Adrenal gland (tissue), 19 donors: ENCODE measurements at regions of chr22 and their contacts with region 1.

Region 1: DNA sequence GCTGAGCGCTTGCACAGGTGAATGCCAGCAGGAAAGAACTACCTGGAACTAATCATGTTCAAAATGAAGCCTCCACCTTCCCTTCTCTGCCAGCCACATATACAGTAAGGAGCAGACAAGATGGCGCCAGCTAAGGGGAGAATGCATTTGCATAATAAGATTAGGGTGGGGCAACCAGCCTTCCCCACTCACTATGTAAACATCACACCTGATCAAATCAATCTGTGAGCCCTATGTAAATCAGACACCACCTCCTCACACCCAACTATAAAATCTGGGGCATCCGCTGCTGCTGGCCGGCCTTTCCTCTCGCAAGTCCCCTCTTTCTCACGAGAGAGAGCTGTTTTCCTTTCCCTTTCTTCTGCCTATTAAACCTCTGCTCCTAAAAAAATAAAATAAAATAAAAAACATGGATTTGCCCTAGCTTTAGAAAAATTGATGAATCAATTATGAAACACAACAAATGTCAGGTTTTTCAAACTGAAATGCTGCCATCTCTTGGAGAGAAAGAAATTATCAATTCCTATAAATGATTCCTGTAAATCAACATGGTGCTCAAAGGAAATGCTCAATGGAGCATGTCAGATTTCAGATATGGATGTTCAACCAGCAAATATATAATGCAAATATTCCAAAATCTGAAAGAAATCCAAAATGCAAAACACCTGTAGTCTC is 108.9 kb downstream of the SGSM3 start:
- DNase-seq: no peak
- H3K4me3 ChIP-seq: no peak overlapping the region
- H3K27ac ChIP-seq: no peak overlapping the region
- H3K4me1 ChIP-seq: peaks cover 11 to 16% of the 10 kb centered on the region in 2 donors
- H3K27me3 ChIP-seq: no peaks in the 10 kb centered on the region
- CTCF ChIP-seq: peak in 1 of 6 experiments; percentile 19
- POLR2A ChIP-seq: no peak

Region 2: DNA sequence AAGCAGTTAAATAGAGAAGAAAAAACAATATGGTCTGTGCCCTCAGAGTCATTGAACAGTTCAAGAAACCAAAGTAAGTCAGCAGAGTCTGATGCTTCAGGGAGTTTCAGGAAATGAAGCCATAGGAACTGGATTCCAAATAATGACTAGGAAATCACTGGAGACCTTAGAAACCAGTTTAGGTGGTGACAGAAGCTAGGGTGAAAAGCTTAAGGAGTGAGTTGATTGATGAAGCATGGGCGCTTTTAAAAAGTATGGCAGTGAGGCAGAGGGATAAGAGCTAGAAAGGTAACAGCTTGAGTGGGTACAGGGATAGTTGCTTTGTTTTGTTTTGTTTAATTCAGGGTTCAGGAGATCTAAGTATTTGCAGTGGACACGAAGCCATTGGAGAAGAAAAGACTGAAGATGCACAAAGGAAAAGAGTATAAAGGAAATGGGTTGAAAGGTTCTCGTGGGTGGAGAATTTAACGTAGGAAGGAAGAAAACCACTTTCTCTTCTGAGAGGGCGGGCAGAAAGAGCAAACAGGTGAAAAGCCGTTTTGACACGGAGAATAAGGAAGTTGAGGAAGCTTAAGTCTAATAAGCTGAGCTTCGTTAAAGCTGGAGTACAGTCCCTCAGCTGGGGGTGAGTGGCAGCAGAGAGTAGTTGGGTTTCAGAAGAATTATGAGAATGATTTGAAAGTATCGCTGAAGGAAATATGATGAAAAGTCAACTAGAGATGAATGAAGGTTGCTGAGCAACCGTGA is 94.1 kb before region 1 on chr22:
- intact Hi-C with region 1: no loop called
- DNase-seq: no peak
- H3K4me3 ChIP-seq: no peak overlapping the region
- H3K27ac ChIP-seq: no peak overlapping the region
- H3K4me1 ChIP-seq: peaks cover 4 to 21% of the 10 kb centered on the region in 2 donors
- H3K27me3 ChIP-seq: no peaks in the 10 kb centered on the region
- CTCF ChIP-seq: no peak
- POLR2A ChIP-seq: no peak

Region 3: DNA sequence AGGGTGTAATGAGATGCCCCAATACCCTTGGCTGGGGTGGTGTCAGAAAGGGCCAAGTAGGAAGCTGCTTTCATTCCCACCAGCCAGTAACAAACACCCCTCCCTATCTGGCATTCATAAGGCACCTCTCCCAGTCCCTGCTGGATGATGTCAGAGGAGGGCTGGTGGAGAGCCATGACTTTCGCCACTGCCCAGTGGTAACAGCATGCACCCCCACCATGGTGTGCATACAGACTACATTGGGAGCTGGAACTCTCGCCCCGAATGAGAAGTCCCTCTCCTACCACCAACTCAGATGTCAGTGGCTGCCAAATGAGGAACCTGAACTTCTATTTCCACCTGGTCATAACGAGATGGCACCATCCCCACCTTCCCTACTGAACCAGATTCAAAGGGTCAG is 35.5 kb before region 1 on chr22:
- intact Hi-C with region 1: loop called (anchors 5 to 10 kb)
- DNase-seq: peak in 1 of 7 donors; percentile 17
- H3K4me3 ChIP-seq: no peak overlapping the region
- H3K27ac ChIP-seq: no peak overlapping the region
- H3K4me1 ChIP-seq: no peaks in the 10 kb centered on the region
- H3K27me3 ChIP-seq: no peaks in the 10 kb centered on the region
- CTCF ChIP-seq: no peak
- POLR2A ChIP-seq: no peak

Region 4: DNA sequence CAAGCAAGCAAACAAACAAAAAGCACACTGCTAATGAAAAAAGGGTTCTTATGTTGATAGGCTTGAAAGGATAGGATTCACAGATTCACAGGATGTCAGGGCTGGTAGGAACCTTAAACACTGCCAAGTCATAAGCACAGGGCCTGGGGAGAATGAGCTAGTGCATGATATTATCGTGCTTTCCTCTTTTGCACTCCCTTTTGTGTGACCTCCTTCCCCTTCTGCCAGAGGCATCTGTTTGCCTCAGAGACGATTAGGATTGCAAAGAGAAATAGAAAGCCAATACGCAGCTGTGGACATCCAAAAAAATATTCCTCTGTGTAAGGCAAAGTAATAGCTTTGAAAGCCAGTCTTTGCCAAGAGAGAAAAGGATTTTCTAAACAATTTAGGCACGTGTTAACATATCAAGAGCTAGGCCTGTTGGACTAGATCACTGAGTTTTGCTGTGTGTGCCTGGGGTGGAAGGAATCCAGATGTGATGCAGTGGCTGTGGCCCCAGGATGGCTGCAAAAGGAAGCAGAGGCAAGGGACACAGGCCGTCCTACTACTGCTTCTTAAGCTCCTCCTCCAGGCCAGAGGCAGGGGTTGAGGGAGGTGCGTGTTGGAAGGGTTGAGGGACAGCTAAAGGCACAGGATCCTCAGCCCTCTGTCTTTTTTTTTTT is 230.6 kb after region 1 on chr22:
- intact Hi-C with region 1: no loop called
- DNase-seq: peak in 6 of 7 donors; percentile 39 to 70 (median 46)
- H3K4me3 ChIP-seq: no peak overlapping the region
- H3K27ac ChIP-seq: peak overlapping the region in 3 of 5 donors; percentile 55 to 88 (median 78)
- H3K4me1 ChIP-seq: peaks cover 19 to 40% of the 10 kb centered on the region in 2 donors
- H3K27me3 ChIP-seq: no peaks in the 10 kb centered on the region
- CTCF ChIP-seq: no peak
- POLR2A ChIP-seq: peak in 1 of 2 donors; percentile 25